ENCODE measurements at regions of chr3 and their contacts with region 1.

Region 1: DNA sequence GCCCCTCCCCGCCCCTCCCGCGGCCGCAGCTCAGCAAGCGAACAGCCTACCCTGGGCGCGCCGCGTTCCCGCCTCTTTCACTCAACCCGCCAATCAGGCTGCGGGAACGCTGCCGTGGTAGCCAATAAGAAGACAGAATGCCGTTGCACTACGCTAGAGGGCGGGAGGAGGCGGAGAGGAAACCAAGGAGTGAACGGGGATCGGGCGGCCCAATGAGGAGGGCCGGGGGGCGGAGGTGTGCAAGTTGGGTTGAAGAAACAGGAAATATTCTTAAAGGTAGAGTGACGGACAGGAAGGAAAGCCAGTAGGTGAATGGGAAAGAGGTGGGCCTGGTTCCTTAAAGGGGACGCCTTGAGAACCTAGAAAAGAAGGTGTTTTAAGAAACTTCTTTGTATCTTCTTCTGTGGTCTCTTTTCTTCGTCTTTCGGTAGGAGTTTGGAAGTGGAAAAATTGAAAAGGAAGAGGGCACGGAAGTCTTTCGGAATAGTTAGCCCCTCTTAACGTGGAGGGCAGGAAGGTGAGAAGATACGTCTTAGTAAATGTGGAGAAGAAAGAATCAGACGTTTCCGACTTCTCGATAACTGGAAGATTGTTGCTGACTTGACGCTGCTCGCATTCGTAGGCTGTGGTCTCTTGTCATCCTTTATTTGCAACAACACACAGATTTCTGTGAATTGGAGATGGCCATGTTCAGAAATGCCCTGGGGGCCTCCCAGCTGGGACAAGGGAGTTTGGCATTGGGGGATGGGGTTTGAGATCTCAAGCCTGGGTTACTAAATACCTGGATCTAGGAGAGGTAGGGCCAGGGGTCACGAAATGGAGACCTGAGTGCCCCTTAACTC is 437 bp upstream of the USF3 start:
- DNase-seq: peak; percentile 98
- ATAC-seq: peak; percentile 90
- H3K4me3 ChIP-seq: peak overlapping the region; percentile 77 to 92 (median 85)
- H3K27ac ChIP-seq: peak overlapping the region; percentile 73
- H3K4me1 ChIP-seq: peaks cover 52% of the 10 kb centered on the region
- H3K27me3 ChIP-seq: no peaks in the 10 kb centered on the region; a peak in 1 of 5 replicates
- CTCF ChIP-seq: peak; percentile 25
- EP300 ChIP-seq: no peak
- POLR2A ChIP-seq: no peak
- RAD21 ChIP-seq: no peak

Region 2: GRCh38 chr3:113663324-113663750 is 33.5 kb before region 1 on chr3:
- CTCF ChIA-PET with region 1: no interaction called
- POLR2A ChIA-PET with region 1: interaction called, 58 read pairs
- in situ Hi-C with region 1: no loop called
- intact Hi-C with region 1: loop called (anchors 1 kb)
- DNase-seq: peak; percentile 94
- ATAC-seq: peak; percentile 97
- H3K4me3 ChIP-seq: peak overlapping the region; percentile 11 to 33 (median 30); a peak in 4 of 6 replicates
- H3K27ac ChIP-seq: peak overlapping the region; percentile 88
- H3K4me1 ChIP-seq: peaks cover 42% of the 10 kb centered on the region
- H3K27me3 ChIP-seq: no peaks in the 10 kb centered on the region
- CTCF ChIP-seq: no peak
- EP300 ChIP-seq: peak in 1 of 2 experiments; percentile 82; a peak in 2 of 4 replicates
- POLR2A ChIP-seq: 0 out of 4 replicates have a peak, but pooled peaks of 1 of the 2 experiments have one; percentile 15
- RAD21 ChIP-seq: no peak

Region 3: GRCh38 chr3:113685956-113686754 is 10.7 kb before region 1 on chr3:
- CTCF ChIA-PET with region 1: no interaction called
- POLR2A ChIA-PET with region 1: interaction called, 15 read pairs
- in situ Hi-C with region 1: no loop called
- intact Hi-C with region 1: no loop called
- DNase-seq: peak; percentile 78
- ATAC-seq: peak; percentile 93
- H3K4me3 ChIP-seq: 0 out of 6 replicates have a peak overlapping the region, but pooled peaks of 1 of the 3 experiments have one; percentile 7
- H3K27ac ChIP-seq: peak overlapping the region; percentile 52
- H3K4me1 ChIP-seq: peaks cover 39% of the 10 kb centered on the region
- H3K27me3 ChIP-seq: no peaks in the 10 kb centered on the region
- CTCF ChIP-seq: peak; percentile 63
- EP300 ChIP-seq: peak; percentile 59 to 70; a peak in 3 of 4 replicates
- POLR2A ChIP-seq: no peak
- RAD21 ChIP-seq: peak; percentile 48

Region 4: DNA sequence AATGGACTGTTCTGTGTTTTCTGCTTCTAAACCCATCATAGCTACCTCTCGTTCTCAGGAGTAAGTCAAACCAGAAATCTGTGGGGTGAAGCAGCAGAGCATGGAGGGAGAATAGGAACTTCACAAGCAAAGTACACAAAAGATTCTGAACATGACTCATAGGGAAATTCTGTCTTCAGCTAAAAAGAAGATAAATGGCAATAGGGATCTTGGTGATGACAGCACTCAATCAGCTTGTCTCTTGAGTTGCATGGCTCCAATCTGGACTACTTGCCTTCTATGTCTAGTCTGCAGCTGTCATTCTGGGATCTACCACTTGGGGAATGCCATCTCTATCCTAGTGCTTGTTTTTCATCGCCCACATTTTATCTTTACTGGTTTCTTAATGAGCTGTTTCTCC is 128.2 kb after region 1 on chr3:
- CTCF ChIA-PET with region 1: no interaction called
- POLR2A ChIA-PET with region 1: no interaction called
- in situ Hi-C with region 1: no loop called
- intact Hi-C with region 1: no loop called
- DNase-seq: no peak
- ATAC-seq: peak; percentile 83
- H3K4me3 ChIP-seq: no peak overlapping the region
- H3K27ac ChIP-seq: no peak overlapping the region
- H3K4me1 ChIP-seq: peaks cover 7% of the 10 kb centered on the region
- H3K27me3 ChIP-seq: no peaks in the 10 kb centered on the region
- CTCF ChIP-seq: 0 out of 2 replicates have a peak, but pooled peaks have one; percentile 4
- EP300 ChIP-seq: no peak
- POLR2A ChIP-seq: no peak
- RAD21 ChIP-seq: no peak